ENCODE measurements at regions of chr6 and their contacts with region 1.

Region 1: GRCh38 chr6:42726485-42727086 is 4.2 kb upstream of the PRPH2 start:
- DNase-seq: peak; percentile 46 to 90
- H3K4me3 ChIP-seq: peak overlapping the region; percentile 53 to 70
- H3K27ac ChIP-seq: peak overlapping the region; percentile 51 to 58
- H3K4me1 ChIP-seq: peaks cover 0 to 5% of the 10 kb centered on the region in 2 donors
- H3K27me3 ChIP-seq: no peaks in the 10 kb centered on the region
- CTCF ChIP-seq: peak; percentile 80 to 89 (median 89)

Region 2: DNA sequence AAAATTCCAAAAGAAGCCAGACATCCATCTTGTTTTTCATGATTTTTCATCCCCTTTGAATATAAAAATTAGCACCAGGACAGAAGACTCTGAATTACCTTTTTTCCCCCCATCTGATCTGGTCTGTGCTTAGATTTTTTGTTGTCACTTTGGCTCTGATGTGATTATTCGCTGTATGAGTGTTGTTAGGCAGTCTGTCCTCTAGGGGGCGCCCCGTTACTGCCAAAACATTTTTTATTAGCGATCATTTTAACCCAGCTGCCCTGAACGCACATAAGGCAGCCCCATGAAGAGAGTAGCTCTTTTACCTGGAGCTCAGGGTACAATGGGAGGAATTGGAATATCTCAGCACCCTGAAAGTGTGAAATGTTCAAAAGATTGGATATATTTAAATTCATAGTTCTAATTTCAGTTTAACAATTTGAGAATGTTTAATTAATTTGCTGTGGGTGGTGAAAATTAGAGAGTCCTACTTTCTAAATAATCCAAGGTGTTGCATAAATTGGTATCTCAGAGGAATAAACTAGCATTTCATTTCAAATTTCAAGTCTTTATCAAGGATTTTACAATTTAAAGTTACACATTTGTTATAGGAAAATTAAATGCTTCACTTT is 64.9 kb before region 1 on chr6:
- intact Hi-C with region 1: loop called (anchors 1 kb)
- DNase-seq: peak in 1 of 2 donors; percentile 90
- H3K4me3 ChIP-seq: no peak overlapping the region
- H3K27ac ChIP-seq: no peak overlapping the region
- H3K4me1 ChIP-seq: no peaks in the 10 kb centered on the region
- H3K27me3 ChIP-seq: no peaks in the 10 kb centered on the region
- CTCF ChIP-seq: peak; percentile 72 to 89 (median 85)

Region 3: GRCh38 chr6:42694586-42694985 is 32.0 kb before region 1 on chr6:
- intact Hi-C with region 1: loop called (anchors 2 kb)
- DNase-seq: no peak
- H3K4me3 ChIP-seq: no peak overlapping the region
- H3K27ac ChIP-seq: peak overlapping the region; percentile 65 to 74
- H3K4me1 ChIP-seq: peaks cover 10 to 38% of the 10 kb centered on the region in 2 donors
- H3K27me3 ChIP-seq: no peaks in the 10 kb centered on the region
- CTCF ChIP-seq: no peak

Region 4: GRCh38 chr6:42710316-42710715 is 16.3 kb before region 1 on chr6:
- intact Hi-C with region 1: no loop called
- DNase-seq: no peak
- H3K4me3 ChIP-seq: no peak overlapping the region
- H3K27ac ChIP-seq: no peak overlapping the region
- H3K4me1 ChIP-seq: no peaks in the 10 kb centered on the region
- H3K27me3 ChIP-seq: no peaks in the 10 kb centered on the region
- CTCF ChIP-seq: no peak

Region 5: DNA sequence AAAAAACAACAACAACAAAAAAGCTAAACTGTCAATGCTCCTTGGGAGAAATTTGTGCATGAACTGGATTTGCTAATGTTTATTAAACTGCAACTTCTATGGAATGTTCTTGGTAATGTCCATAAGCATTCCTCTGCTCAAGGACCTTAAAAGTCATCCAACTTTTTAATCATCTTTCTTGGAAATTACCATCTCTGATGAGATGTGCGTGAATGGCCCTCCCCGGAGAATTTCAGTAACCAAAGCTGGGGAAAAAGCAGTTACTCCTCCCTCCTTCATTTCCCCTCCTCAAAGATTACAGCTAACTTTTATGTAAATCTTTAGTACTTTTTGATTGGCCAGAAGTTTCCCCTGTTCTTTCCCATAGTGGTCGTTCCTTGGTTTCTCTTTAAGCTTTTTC is 14.1 kb after region 1 on chr6:
- intact Hi-C with region 1: no loop called
- DNase-seq: no peak
- H3K4me3 ChIP-seq: no peak overlapping the region
- H3K27ac ChIP-seq: no peak overlapping the region
- H3K4me1 ChIP-seq: peaks cover 10 to 14% of the 10 kb centered on the region in 2 donors
- H3K27me3 ChIP-seq: no peaks in the 10 kb centered on the region
- CTCF ChIP-seq: no peak

Measured in ascending aorta (tissue), 2 donors.